ENCODE measurements at regions of chr11 and their contacts with region 1.

Region 1: GRCh38 chr11:124961972-124962609 is 8.1 kb downstream of the CCDC15 start:
- DNase-seq: no peak

Region 2: DNA sequence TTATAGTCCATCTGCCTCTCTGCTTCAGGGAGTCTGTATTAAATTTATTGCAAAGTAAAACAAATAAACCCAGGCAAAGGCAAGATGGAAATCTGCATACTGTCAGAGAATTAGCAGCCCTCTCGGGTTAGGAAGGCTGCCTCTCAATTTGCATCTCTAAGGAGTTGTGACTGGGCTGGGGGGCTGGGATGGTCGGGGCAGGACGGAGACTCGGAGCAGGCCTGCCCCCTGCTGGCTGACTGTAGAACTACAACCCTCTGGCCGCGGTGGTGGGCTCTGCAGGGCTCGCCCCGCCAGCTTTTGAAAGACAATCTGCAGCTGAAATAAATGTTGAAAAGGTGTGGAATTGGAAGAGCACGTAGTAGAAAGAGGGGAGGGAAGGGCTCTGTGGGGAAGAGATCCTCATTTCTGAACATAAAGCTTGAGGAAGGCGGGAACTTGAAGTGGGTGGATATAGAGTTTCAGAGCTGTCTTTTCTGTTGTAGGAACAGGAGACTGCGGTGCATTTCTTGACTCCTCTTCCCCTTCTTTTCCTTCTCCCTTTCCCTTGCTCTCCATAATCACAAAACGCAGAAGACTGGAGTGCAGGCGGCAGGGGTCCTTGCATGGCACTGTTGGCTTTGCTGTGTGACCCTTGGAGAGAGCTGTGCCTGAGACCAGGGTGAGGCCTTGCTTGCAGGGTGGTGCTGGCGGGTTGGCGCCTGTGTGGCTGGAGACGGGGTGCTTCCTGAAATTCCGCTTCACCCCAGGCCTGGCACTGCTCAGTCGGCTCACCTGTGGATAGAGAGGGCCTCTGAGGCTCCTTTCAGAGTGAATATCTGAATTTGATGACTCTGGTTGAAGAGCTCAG is 179.8 kb after region 1 on chr11:
- intact Hi-C with region 1: loop called in 1 of 2 experiments (anchors 10 kb)
- DNase-seq: no peak